H1 (cell line): ENCODE measurements at regions of chr11 and their contacts with region 1.

Region 1: DNA sequence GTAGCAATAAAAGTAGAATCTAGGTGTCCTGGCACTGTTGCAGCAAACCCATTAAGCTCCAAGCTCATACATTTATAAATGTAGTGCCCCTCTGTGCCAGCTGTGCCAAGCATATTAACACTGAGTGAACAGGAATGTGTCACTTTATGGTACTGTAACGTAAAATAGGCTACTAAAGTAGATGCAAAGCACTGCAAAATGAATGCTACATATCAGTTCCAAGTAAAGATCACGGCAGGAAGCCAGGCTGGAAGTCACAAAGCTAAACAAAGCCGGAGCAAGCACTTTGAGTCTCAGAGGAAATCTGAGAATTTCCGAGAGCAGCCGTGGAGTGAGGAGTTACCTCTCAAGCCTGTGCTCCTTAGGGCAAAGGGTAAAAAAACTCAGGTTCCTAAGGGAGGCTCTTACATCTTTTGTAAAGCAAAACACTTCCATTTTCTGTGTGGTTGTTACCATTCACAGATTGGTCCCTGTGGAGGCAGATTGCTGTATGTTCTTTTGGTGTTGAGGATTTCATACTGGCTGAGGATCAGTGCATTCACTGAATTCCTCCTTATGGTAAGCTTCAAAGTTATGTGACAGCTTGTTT is 85.7 kb downstream of the WNT11 start:
- DNase-seq: peak in 1 of 2 experiments; percentile 15
- H3K4me3 ChIP-seq: no peak overlapping the region
- H3K27ac ChIP-seq: no peak overlapping the region
- H3K4me1 ChIP-seq: peaks cover 4 to 19% (median 8%) of the 10 kb centered on the region in 4 experiments; a peak in 6 of 7 replicates
- H3K27me3 ChIP-seq: no peaks in the 10 kb centered on the region
- CTCF ChIP-seq: no peak
- EP300 ChIP-seq: no peak
- POLR2A ChIP-seq: no peak
- RAD21 ChIP-seq: no peak

Region 2: DNA sequence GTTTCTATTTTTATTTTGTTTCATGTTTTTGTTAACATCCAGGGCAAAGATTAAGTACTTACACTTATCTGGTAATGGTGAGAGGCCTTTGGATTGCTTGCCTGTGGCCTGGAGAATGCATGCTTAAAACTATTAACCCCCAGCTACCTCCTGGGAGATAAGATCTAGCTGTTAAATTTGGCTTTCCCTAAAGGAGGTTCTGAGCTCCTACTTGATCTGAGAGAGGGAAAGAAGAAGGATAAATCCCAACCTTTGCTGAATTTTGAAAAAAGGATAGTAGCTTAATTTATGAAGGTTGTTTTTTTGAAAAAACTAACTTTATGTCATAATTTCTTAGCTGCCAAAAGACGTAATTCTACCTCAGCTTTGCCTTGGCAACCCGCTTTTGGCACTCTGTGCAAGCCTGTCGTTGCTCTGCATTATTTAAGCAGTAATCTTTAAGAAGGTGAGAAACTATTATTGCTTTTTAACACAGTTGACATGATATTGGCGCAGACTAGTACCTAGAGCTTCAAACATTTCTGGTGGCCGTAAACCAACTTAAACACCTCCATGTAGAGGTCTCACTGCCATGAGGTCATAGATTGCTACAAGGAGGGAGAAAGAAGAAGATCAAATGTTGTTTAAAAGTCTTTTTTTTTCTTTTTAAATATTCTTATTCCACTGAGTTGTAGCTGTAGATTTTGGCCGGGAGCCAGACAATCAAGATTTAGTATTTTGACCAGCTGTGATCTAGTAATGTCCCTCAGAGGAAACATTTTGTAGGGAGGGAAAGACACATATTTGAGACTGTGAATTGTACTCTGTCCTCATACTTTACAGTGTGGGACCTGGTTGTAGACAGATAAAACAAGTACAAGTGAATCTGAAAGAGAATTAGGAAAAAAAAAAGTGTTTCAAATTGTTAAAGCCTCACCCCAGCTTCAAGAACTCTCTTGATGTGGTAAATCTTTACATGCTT is 11.3 kb after region 1 on chr11:
- CTCF ChIA-PET with region 1: interaction called, 14 read pairs
- POLR2A ChIA-PET with region 1: no interaction called
- DNase-seq: no peak
- H3K4me3 ChIP-seq: no peak overlapping the region
- H3K27ac ChIP-seq: no peak overlapping the region
- H3K4me1 ChIP-seq: no peaks in the 10 kb centered on the region
- H3K27me3 ChIP-seq: no peaks in the 10 kb centered on the region
- CTCF ChIP-seq: no peak
- EP300 ChIP-seq: no peak
- POLR2A ChIP-seq: no peak
- RAD21 ChIP-seq: no peak

Region 3: DNA sequence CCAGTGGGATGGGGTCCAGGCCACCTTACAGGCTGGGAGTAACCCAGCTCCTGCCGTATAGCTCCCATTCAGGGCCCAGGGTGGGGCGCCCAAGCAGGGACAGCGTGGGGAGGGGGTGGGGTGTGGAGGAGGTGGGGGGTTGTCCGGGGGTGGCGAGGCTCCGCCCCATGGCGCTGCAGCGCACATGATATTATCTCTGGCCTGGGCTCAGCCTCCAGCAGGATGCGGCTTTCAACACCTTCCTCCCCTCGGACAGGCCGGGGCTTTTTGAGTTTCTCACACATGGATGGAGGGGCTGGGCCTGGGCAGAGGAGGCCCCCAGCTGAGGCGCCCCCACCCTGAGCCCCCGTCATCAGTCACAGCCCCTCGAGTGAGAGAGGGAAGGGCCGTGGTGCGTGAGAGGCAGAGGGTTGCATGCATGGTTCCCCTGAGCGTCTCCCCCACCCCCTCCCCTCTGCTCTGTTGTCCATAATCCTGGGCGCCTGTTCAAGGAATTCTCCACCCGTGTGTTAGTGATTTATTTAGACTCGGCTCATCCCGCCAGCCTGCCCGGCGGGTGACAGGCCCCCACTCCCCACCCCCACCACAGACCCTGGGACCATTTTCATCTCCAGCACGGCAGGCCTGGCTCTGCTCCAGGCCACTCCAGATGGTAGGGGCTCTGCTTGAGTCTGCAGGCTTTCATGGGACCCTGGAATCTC is 40.8 kb after region 1 on chr11:
- CTCF ChIA-PET with region 1: no interaction called
- POLR2A ChIA-PET with region 1: no interaction called
- DNase-seq: no peak
- H3K4me3 ChIP-seq: no peak overlapping the region
- H3K27ac ChIP-seq: no peak overlapping the region
- H3K4me1 ChIP-seq: peaks cover 0 to 2% (median under 1%) of the 10 kb centered on the region in 4 experiments; a peak in 3 of 7 replicates
- H3K27me3 ChIP-seq: peaks cover 5 to 25% (median 14%) of the 10 kb centered on the region in 4 experiments
- CTCF ChIP-seq: no peak
- EP300 ChIP-seq: no peak
- POLR2A ChIP-seq: no peak
- RAD21 ChIP-seq: no peak